T-cell (primary cell): ENCODE measurements at regions of chr13 and their contacts with region 1.

Region 1: GRCh38 chr13:44263751-44264620 is 109.6 kb upstream of the SERP2 start:
- DNase-seq: no peak
- ATAC-seq: no peak
- H3K4me3 ChIP-seq: no peak overlapping the region
- H3K4me3 Mint-ChIP-seq: no peak overlapping the region
- H3K27ac ChIP-seq: no peak overlapping the region
- H3K27ac Mint-ChIP-seq: no peak overlapping the region
- H3K4me1 ChIP-seq: peaks cover 0 to 9% of the 10 kb centered on the region in 2 experiments
- H3K4me1 Mint-ChIP-seq: peaks cover 16 to 22% (median 17%) of the 10 kb centered on the region in 3 donors
- H3K27me3 ChIP-seq: peaks cover 0 to 4% of the 10 kb centered on the region in 2 experiments
- H3K27me3 Mint-ChIP-seq: peaks cover 0 to 6% of the 10 kb centered on the region in 2 donors

Region 2: GRCh38 chr13:44364348-44365049 is 100.5 kb after region 1 on chr13:
- CTCF ChIA-PET with region 1: no interaction called
- POLR2A ChIA-PET with region 1: interaction called in 1 of 2 experiments, 11 read pairs
- DNase-seq: no peak
- ATAC-seq: no peak
- H3K4me3 ChIP-seq: no peak overlapping the region
- H3K4me3 Mint-ChIP-seq: no peak overlapping the region
- H3K27ac ChIP-seq: no peak overlapping the region
- H3K27ac Mint-ChIP-seq: no peak overlapping the region
- H3K4me1 ChIP-seq: no peaks in the 10 kb centered on the region
- H3K4me1 Mint-ChIP-seq: no peaks in the 10 kb centered on the region
- H3K27me3 ChIP-seq: no peaks in the 10 kb centered on the region
- H3K27me3 Mint-ChIP-seq: peaks cover 6 to 16% of the 10 kb centered on the region in 2 donors